Calu3 (cell line): ENCODE measurements at regions of chr3 and their contacts with region 1.

Region 1: DNA sequence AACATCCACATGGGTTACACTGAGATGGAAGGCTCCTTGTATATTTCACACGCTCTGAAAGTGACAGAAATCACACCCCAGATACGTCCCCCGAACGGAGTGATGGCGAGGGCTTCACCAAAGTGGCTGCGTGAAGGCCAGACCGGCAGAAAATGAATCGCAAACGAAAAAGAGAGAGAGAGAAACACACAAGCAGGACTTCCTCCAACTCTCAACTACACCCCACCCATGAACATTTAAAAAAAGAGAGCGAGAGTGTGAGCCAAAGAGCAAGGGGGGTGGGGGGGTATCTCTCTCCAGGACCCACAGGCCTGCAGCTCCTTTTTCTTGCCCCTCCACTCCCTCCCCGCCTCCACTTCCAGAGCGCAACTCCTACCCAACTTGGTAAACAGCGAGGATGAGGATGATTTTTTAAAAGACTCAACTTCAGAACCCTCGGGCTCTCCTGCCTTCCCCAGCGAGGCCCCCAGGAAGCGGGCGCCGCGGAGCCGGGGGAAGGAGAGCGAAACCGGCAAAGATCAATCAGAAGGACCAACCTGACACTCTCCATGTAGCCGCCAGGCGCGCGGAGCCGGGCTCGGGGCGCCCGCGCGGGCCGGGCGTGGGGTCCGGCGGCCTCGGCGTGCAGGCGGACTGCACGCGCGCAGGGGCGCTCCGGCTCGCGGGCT is 519.1 kb downstream of the FOXP1 start:
- DNase-seq: peak; percentile 61
- H3K4me3 Mint-ChIP-seq: no peak overlapping the region
- H3K27ac Mint-ChIP-seq: no peak overlapping the region
- H3K4me1 Mint-ChIP-seq: peaks cover 29% of the 10 kb centered on the region
- H3K27me3 Mint-ChIP-seq: no peaks in the 10 kb centered on the region
- CTCF ChIP-seq: no peak

Region 2: DNA sequence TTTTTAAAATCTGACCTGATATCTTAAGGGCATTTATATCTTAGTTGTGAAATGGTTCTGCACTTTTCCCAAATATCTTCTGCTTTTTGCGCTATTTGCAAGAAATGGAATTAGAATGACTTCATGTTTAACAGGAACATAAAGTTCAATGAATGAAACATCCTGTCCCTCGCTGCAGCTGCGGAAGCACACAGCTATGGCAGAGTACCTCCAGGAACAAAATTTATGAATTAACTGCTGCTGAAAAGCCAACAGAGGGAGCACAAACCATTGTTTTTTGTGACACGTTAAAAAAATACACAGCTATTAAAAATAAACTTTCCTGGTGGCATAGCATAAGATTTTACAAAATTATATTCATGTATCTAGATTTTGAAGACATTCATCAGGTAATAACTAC is 347.6 kb before region 1 on chr3:
- CTCF ChIA-PET with region 1: no interaction called
- intact Hi-C with region 1: loop called (anchors 10 kb)
- DNase-seq: no peak
- H3K4me3 Mint-ChIP-seq: no peak overlapping the region
- H3K27ac Mint-ChIP-seq: no peak overlapping the region
- H3K4me1 Mint-ChIP-seq: no peaks in the 10 kb centered on the region
- H3K27me3 Mint-ChIP-seq: no peaks in the 10 kb centered on the region
- CTCF ChIP-seq: no peak

Region 3: GRCh38 chr3:71006810-71007785 is 57.3 kb before region 1 on chr3:
- CTCF ChIA-PET with region 1: no interaction called
- intact Hi-C with region 1: loop called (anchors 2 kb)
- DNase-seq: peak; percentile 29
- H3K4me3 Mint-ChIP-seq: no peak overlapping the region
- H3K27ac Mint-ChIP-seq: peak overlapping the region; percentile 87
- H3K4me1 Mint-ChIP-seq: peaks cover 23% of the 10 kb centered on the region
- H3K27me3 Mint-ChIP-seq: no peaks in the 10 kb centered on the region
- CTCF ChIP-seq: no peak

Region 4: DNA sequence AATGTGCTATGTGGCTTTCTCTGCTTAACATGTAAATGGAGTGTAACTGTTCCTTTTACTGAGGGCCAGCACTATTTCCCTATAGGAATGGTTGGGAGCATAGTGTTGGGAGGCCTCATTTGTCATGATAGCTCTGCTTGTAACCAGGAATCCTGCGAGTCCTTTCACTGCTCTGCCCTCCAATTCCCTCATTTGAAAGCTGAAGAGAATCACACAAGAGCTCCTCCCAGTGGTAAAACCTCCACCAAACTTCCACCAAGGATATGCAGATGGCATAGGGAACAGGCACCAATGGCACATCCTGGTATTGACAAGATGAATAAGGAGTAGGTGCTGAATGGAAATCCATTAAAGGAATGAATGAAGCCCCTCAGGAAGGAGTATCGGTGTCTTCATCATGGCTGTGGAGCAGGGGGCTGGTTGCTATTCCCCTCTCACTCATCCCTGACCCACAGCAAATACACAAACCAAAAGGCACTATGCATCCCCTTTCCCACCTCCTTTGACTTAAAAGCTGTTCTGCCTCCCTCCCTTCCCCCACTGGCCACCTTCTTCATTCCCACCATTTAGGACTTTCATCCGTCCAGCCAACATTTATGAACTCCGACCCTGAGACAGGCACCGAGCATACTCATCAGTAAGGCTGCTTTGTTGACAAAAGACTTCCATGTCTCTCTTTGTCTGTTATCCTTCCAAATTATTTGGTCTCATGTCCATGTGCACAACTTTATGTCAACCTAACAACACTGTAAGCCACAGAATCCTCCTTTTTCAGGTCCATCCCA is 41.7 kb before region 1 on chr3:
- CTCF ChIA-PET with region 1: no interaction called
- intact Hi-C with region 1: loop called (anchors 5 kb)
- DNase-seq: peak; percentile 20
- H3K4me3 Mint-ChIP-seq: no peak overlapping the region
- H3K27ac Mint-ChIP-seq: no peak overlapping the region
- H3K4me1 Mint-ChIP-seq: peaks cover 53% of the 10 kb centered on the region
- H3K27me3 Mint-ChIP-seq: no peaks in the 10 kb centered on the region
- CTCF ChIP-seq: no peak

Region 5: GRCh38 chr3:71130471-71131374 is 66.3 kb after region 1 on chr3:
- CTCF ChIA-PET with region 1: interaction called, 4 read pairs
- intact Hi-C with region 1: loop called (anchors 2 kb)
- DNase-seq: peak; percentile 45
- H3K4me3 Mint-ChIP-seq: peak overlapping the region; percentile 88
- H3K27ac Mint-ChIP-seq: peak overlapping the region; percentile 89
- H3K4me1 Mint-ChIP-seq: peaks cover 59% of the 10 kb centered on the region
- H3K27me3 Mint-ChIP-seq: no peaks in the 10 kb centered on the region
- CTCF ChIP-seq: no peak

Region 6: DNA sequence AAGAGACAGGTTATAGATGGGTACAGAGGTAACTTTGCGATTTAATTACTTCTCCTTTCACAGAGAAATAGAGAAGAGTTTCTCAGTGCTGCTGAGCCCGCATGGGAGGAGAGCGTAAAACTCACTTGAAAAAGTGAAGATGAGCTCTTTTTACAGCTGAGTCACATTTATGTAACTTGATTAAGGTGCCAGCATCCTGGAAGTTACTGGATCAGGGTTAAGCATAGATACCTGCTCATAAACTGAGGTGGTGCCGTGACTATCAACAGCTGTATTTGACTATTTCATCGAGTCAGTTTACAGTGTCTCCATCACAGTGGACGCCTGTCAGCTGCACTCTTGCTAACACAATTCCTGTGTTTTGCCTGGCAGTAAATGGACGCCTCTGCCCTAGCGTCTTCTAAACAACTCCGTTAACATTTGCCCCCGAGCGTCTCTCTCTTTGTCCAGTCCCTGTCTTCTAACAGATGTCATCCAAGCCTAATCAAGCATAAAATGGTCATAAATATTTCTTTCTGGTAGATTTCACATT is 104.5 kb after region 1 on chr3:
- CTCF ChIA-PET with region 1: no interaction called
- intact Hi-C with region 1: no loop called
- DNase-seq: no peak
- H3K4me3 Mint-ChIP-seq: no peak overlapping the region
- H3K27ac Mint-ChIP-seq: no peak overlapping the region
- H3K4me1 Mint-ChIP-seq: peaks cover 6% of the 10 kb centered on the region
- H3K27me3 Mint-ChIP-seq: no peaks in the 10 kb centered on the region
- CTCF ChIP-seq: no peak

Region 7: GRCh38 chr3:71247221-71247976 is 183.0 kb after region 1 on chr3:
- CTCF ChIA-PET with region 1: no interaction called
- intact Hi-C with region 1: loop called (anchors 2 kb)
- DNase-seq: peak; percentile 58
- H3K4me3 Mint-ChIP-seq: peak overlapping the region; percentile 56
- H3K27ac Mint-ChIP-seq: peak overlapping the region; percentile 89
- H3K4me1 Mint-ChIP-seq: peaks cover 55% of the 10 kb centered on the region
- H3K27me3 Mint-ChIP-seq: no peaks in the 10 kb centered on the region
- CTCF ChIP-seq: no peak